H1 (cell line): ENCODE measurements at regions of chr2 and their contacts with region 1.

Region 1: GRCh38 chr2:151032741-151033191 is 228.9 kb downstream of the RBM43 start:
- DNase-seq: no peak
- H3K4me3 ChIP-seq: no peak overlapping the region
- H3K27ac ChIP-seq: no peak overlapping the region
- H3K4me1 ChIP-seq: no peaks in the 10 kb centered on the region
- H3K27me3 ChIP-seq: no peaks in the 10 kb centered on the region
- CTCF ChIP-seq: no peak
- EP300 ChIP-seq: no peak
- POLR2A ChIP-seq: no peak
- RAD21 ChIP-seq: no peak

Region 2: DNA sequence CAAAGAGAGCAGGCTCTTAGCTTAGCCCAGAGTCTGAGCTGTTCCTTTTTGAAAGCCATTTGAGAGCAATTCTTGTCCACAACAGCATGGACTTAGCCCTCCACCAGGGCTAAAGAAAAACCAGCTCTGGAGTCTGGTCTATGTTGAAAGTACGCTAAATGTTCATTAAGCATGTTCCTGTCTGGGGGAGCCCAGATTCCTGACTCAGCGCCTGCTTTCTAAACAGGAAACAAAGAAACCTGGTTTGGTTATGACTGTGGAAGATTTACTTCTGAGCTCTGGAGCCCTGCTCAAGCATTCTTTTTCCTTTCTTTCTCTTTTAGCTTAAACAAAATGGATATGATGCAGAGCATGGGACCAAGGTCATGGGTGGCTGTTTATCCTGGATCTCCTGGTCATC is 50.9 kb before region 1 on chr2:
- CTCF ChIA-PET with region 1: no interaction called
- POLR2A ChIA-PET with region 1: no interaction called
- DNase-seq: no peak
- H3K4me3 ChIP-seq: no peak overlapping the region
- H3K27ac ChIP-seq: no peak overlapping the region
- H3K4me1 ChIP-seq: peaks cover 0 to 12% (median 4%) of the 10 kb centered on the region in 4 experiments; a peak in 6 of 7 replicates
- H3K27me3 ChIP-seq: no peaks in the 10 kb centered on the region
- CTCF ChIP-seq: no peak
- EP300 ChIP-seq: no peak
- POLR2A ChIP-seq: no peak
- RAD21 ChIP-seq: no peak

Region 3: DNA sequence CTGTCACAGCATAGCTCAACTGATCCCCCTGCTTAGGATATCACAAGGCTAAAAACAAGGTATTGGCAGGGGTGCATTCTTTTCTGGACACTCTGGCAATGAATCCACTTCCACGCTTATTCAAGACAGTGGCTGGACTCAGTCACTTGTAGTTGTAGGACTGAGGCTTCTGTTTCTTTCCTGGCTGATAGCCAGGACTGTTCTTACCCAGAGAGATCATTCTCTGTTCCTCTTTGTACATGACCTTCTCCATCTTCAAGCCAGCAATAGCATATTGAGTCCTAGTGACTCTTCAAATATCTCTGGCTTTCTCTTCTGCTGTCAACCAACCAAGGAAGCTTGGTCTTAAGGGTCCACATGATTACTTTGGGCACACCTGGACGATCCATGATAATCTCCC is 12.4 kb before region 1 on chr2:
- CTCF ChIA-PET with region 1: interaction called, 11 read pairs
- POLR2A ChIA-PET with region 1: no interaction called
- DNase-seq: no peak
- H3K4me3 ChIP-seq: no peak overlapping the region
- H3K27ac ChIP-seq: no peak overlapping the region
- H3K4me1 ChIP-seq: no peaks in the 10 kb centered on the region
- H3K27me3 ChIP-seq: no peaks in the 10 kb centered on the region
- CTCF ChIP-seq: no peak
- EP300 ChIP-seq: no peak
- POLR2A ChIP-seq: no peak
- RAD21 ChIP-seq: no peak

Region 4: DNA sequence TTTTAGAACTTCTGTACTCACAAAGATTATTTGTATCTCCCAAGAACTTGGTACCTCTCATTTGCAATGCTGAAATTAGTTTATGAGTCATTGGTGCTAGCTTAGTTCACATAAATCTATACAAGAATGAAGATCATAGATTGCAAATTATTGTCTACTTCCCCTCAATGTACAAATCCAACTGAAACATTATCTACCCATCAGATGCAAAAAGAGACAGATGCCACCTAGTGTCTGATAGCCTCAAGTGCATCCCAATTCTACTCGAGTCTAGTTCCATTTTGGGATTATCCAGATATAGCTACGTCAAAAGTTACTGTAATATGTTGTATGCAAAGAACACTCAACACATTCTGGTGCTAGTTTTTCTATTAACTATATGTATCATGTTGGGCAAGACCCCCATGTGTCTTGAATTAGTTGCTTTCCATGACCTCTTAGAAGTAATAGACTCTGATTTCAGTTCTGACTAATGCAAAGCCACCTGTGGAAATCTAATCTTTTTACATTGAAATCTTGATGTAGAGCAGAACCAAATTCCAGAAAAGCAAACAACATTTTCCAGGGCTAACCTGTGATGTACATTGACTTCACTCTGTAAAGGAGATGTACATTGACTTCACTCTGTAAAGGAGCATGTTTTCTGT is 18.9 kb after region 1 on chr2:
- CTCF ChIA-PET with region 1: interaction called, 16 read pairs
- POLR2A ChIA-PET with region 1: no interaction called
- DNase-seq: no peak
- H3K4me3 ChIP-seq: no peak overlapping the region
- H3K27ac ChIP-seq: no peak overlapping the region
- H3K4me1 ChIP-seq: no peaks in the 10 kb centered on the region
- H3K27me3 ChIP-seq: no peaks in the 10 kb centered on the region
- CTCF ChIP-seq: peak in 2 of 3 experiments; percentile 45 to 78; a peak in 2 of 4 replicates
- EP300 ChIP-seq: no peak
- POLR2A ChIP-seq: no peak
- RAD21 ChIP-seq: peak; percentile 70 to 78

Region 5: DNA sequence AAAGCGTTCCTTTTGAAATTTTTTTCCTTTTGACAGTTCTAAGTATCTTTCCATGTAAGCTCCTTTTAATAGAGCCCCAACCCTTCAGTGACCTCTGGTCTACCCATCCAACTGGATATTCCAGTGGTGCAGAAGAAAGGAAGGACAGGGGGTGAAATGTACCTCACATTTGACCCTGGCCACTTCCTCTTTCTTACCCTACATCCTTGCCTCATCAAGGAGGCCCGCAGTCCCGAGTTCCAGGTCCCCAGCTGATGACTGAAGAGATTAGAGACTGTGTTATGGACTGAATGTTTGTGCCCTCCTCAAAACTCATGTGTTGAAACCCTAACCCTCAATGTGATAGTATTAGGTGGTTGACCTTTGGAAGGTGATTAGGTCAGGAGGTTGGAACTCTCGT is 70.8 kb after region 1 on chr2:
- CTCF ChIA-PET with region 1: no interaction called
- POLR2A ChIA-PET with region 1: no interaction called
- DNase-seq: no peak
- H3K4me3 ChIP-seq: no peak overlapping the region
- H3K27ac ChIP-seq: no peak overlapping the region
- H3K4me1 ChIP-seq: no peaks in the 10 kb centered on the region; a peak in 1 of 7 replicates
- H3K27me3 ChIP-seq: no peaks in the 10 kb centered on the region
- CTCF ChIP-seq: no peak
- EP300 ChIP-seq: no peak
- POLR2A ChIP-seq: no peak
- RAD21 ChIP-seq: no peak